Endothelial cell of umbilical vein (primary cell): ENCODE measurements at regions of chr1 and their contacts with region 1.

Region 1: DNA sequence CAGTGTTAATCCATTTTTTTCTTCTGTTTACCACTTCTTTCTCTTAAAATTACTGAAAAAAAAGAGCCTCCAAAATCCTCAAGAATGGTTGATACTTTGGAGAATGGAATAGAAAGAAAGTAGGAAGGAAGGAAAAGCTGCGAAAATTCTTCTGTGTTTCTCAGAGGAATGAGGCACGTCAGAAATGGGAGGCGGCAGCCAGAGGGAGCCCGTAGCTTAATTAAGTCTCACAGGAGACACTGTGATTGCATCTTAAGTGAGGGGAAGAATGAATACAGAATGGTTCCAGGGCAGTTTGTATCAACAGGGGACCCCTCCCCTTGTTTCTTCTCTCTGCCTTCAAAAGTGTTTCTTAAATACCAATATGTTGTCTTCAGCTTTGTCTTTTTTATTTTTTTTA is 1099.5 kb downstream of the PLA2G4A start:
- DNase-seq: peak; percentile 78
- H3K4me3 ChIP-seq: no peak overlapping the region
- H3K27ac ChIP-seq: no peak overlapping the region
- H3K4me1 ChIP-seq: peaks cover 6% of the 10 kb centered on the region
- H3K27me3 ChIP-seq: no peaks in the 10 kb centered on the region
- CTCF ChIP-seq: peak; percentile 52 to 58
- POLR2A ChIP-seq: no peak

Region 2: GRCh38 chr1:187051618-187052232 is 876.6 kb before region 1 on chr1:
- CTCF ChIA-PET with region 1: interaction called, 4 read pairs
- POLR2A ChIA-PET with region 1: no interaction called
- dilution Hi-C with region 1: no loop called
- intact Hi-C with region 1: loop called (anchors 10 kb)
- DNase-seq: peak; percentile 62
- H3K4me3 ChIP-seq: no peak overlapping the region
- H3K27ac ChIP-seq: no peak overlapping the region
- H3K4me1 ChIP-seq: no peaks in the 10 kb centered on the region
- H3K27me3 ChIP-seq: no peaks in the 10 kb centered on the region
- CTCF ChIP-seq: peak; percentile 28 to 33
- POLR2A ChIP-seq: no peak

Region 3: GRCh38 chr1:187942986-187943385 is 14.7 kb after region 1 on chr1:
- CTCF ChIA-PET with region 1: interaction called, 14 read pairs
- POLR2A ChIA-PET with region 1: no interaction called
- dilution Hi-C with region 1: no loop called
- intact Hi-C with region 1: no loop called
- DNase-seq: no peak
- H3K4me3 ChIP-seq: no peak overlapping the region
- H3K27ac ChIP-seq: no peak overlapping the region
- H3K4me1 ChIP-seq: no peaks in the 10 kb centered on the region
- H3K27me3 ChIP-seq: no peaks in the 10 kb centered on the region
- CTCF ChIP-seq: no peak
- POLR2A ChIP-seq: no peak

Region 4: GRCh38 chr1:188006354-188006753 is 78.1 kb after region 1 on chr1:
- CTCF ChIA-PET with region 1: no interaction called
- POLR2A ChIA-PET with region 1: no interaction called
- dilution Hi-C with region 1: no loop called
- intact Hi-C with region 1: no loop called
- DNase-seq: peak; percentile 40
- H3K4me3 ChIP-seq: no peak overlapping the region
- H3K27ac ChIP-seq: peak overlapping the region; percentile 55
- H3K4me1 ChIP-seq: peaks cover 8% of the 10 kb centered on the region
- H3K27me3 ChIP-seq: no peaks in the 10 kb centered on the region
- CTCF ChIP-seq: no peak
- POLR2A ChIP-seq: no peak

Region 5: GRCh38 chr1:188128761-188129160 is 200.5 kb after region 1 on chr1:
- CTCF ChIA-PET with region 1: interaction called, 39 read pairs
- POLR2A ChIA-PET with region 1: no interaction called
- dilution Hi-C with region 1: no loop called
- intact Hi-C with region 1: loop called (anchors 1 kb)
- DNase-seq: peak; percentile 17
- H3K4me3 ChIP-seq: no peak overlapping the region
- H3K27ac ChIP-seq: no peak overlapping the region
- H3K4me1 ChIP-seq: no peaks in the 10 kb centered on the region
- H3K27me3 ChIP-seq: no peaks in the 10 kb centered on the region
- CTCF ChIP-seq: peak in 1 of 2 donors; percentile 8
- POLR2A ChIP-seq: no peak

Region 6: GRCh38 chr1:188706742-188707141 is 778.5 kb after region 1 on chr1:
- CTCF ChIA-PET with region 1: interaction called, 3 read pairs
- POLR2A ChIA-PET with region 1: no interaction called
- dilution Hi-C with region 1: no loop called
- intact Hi-C with region 1: loop called (anchors 1 kb)
- DNase-seq: peak; percentile 94
- H3K4me3 ChIP-seq: no peak overlapping the region
- H3K27ac ChIP-seq: peak overlapping the region; percentile 93
- H3K4me1 ChIP-seq: peaks cover 25% of the 10 kb centered on the region
- H3K27me3 ChIP-seq: no peaks in the 10 kb centered on the region
- CTCF ChIP-seq: peak; percentile 20 to 26
- POLR2A ChIP-seq: no peak

Region 7: GRCh38 chr1:189429610-189430009 is 1501.3 kb after region 1 on chr1:
- CTCF ChIA-PET with region 1: no interaction called
- POLR2A ChIA-PET with region 1: no interaction called
- dilution Hi-C with region 1: no loop called
- intact Hi-C with region 1: loop called (anchors 2 kb)
- DNase-seq: peak; percentile 35
- H3K4me3 ChIP-seq: no peak overlapping the region
- H3K27ac ChIP-seq: no peak overlapping the region
- H3K4me1 ChIP-seq: no peaks in the 10 kb centered on the region
- H3K27me3 ChIP-seq: no peaks in the 10 kb centered on the region
- CTCF ChIP-seq: peak; percentile 49 to 59
- POLR2A ChIP-seq: no peak